ENCODE measurements at regions of chr17 and their contacts with region 1.

Region 1: DNA sequence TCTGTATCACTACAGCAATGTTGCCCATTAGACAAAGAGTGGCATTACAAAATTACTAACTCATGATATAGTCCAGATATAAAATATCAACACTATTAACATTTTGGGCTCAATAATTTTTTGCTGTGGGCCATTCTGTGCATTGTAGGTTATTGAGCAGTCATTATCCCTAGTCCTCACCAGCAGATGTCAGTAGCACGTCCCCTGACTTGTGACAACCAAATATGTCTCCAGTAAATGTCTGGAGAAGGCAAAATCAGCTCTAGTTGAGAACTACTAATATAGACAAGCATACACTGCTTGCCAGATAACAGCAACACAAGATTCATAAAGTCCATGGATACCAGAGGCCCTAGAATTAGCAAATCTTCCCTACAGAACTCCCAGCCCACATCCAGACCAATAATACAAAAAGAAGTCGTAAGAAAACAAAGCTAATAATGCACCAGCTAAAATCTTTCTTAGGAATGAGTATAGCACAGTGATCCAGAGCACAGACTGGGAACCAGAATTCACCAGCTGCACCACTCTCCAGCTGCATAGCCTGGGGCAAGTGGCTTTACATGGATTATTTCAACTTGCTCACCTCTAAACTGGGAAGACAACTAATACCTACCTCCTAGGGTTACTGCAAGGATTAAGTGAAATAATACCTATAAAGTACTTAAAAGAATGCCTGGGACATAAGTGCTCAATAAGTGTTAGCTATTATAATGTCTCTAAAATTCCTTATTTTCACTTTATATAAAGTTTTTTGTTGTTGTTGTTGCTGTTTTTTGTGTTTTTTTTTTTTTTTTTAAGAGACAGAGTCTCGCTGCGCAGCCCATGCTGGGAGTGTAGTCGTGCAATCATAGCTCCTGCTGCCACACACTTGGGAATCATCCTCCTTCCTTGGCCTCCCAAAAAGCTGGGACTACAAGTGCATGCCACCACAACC is 23.7 kb downstream of the HELZ start:
- DNase-seq: peak in 1 of 2 donors; percentile 26
- H3K4me3 ChIP-seq: no peak overlapping the region
- H3K27ac ChIP-seq: no peak overlapping the region
- H3K4me1 ChIP-seq: peaks cover 0 to 6% (median 2%) of the 10 kb centered on the region in 4 donors
- H3K27me3 ChIP-seq: no peaks in the 10 kb centered on the region
- CTCF ChIP-seq: peak; percentile 48

Region 2: DNA sequence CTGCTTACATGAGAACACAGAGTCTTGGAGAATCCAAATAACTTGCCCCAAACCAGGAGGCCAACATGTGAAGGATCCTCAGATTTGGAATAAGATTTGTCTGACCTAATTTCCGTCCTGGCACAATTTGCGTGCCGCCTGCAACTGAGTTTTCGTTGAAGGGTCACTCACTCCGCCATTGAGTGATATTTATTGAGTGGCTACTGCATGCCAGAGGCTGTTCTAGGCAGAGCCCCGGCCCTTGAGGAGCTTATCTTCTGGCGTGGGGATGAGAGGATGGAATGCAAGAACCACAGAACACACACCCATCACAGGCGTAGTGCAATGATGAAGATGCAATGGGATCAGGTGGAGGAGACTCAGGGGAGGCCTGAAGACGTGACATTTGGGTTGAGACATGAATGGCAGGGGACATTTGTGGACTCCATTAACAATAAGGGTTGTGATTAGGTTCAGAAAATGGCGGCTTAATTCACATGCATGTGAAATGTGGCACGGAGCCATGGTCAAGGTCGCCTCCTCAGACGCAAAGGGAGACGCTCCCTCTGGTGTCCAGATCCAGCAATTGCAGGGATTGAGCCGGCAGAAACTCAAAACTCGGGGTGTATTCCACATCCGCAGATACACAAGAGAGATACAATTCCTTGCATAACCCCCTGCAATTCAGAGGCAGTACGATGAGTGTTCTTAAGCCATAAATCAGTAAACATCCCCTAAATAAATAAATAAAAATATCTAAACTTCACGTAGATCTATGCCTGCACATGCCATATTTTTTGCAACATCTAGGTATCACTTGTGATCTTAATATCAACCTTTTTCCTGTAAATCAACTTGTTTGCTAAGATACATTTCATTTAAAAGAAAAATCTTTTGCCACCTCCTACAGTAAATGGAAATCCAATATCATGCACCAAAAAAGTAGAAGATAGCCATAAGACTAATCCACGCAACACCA is 314.7 kb before region 1 on chr17:
- intact Hi-C with region 1: no loop called
- DNase-seq: peak; percentile 64 to 75
- H3K4me3 ChIP-seq: no peak overlapping the region
- H3K27ac ChIP-seq: no peak overlapping the region
- H3K4me1 ChIP-seq: peaks cover 0 to 14% (median 5%) of the 10 kb centered on the region in 4 donors
- H3K27me3 ChIP-seq: no peaks in the 10 kb centered on the region
- CTCF ChIP-seq: peak; percentile 65 to 79

Region 3: DNA sequence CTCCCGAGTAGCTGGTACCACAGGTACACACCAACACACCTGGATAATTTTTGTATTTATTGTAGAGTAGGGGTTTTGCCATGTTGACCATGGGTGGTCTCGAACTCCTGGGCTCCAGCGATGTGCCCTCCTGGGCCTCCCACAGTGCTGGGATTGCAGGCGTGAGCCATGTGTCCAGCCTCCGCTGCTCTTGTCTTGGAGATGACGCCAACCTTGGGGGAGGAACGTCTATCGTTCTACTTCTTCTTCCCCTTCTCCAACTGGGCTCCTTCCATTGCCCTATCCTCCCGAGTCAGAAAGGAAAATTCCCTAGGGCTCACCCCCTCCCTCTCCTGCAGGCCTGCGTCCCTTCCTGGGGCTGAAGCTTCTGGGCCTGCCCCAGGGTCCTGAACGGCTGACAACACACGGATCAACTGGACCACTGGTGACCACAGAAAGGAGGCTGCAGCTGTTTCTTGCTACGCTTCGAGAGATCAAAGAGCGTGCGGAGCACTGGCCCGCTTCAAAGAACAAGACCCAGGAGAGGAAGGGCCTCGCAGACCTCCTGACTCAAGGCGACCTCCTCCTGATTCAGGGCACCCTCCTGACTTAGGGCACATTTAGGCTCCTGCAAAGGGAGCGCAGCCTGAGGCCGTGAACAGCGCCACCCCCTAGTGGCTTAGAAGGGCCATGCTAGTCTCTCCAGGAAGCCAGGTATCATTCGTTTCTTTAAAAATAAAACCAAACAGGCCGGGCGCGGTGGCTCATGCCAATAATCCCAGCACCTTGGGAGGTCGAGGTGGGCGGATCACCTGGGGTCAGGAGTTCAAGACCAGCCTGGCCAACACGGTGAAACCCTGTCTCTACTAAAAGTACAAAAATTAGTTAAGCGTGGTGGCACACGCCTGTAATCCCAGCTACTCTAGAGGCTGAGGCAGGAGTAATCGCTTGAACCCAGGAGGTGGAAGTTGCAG is 72.2 kb after region 1 on chr17:
- intact Hi-C with region 1: loop called (anchors 10 kb)
- DNase-seq: peak; percentile 65 to 77
- H3K4me3 ChIP-seq: no peak overlapping the region
- H3K27ac ChIP-seq: no peak overlapping the region
- H3K4me1 ChIP-seq: peaks cover 0 to 18% (median 13%) of the 10 kb centered on the region in 4 donors
- H3K27me3 ChIP-seq: peaks cover 0 to 6% of the 10 kb centered on the region in 2 donors
- CTCF ChIP-seq: peak; percentile 65 to 76

Measured in tibial artery (tissue), 4 donors.